Transverse colon (tissue), 4 donors: ENCODE measurements at regions of chr11 and their contacts with region 1.

Region 1: DNA sequence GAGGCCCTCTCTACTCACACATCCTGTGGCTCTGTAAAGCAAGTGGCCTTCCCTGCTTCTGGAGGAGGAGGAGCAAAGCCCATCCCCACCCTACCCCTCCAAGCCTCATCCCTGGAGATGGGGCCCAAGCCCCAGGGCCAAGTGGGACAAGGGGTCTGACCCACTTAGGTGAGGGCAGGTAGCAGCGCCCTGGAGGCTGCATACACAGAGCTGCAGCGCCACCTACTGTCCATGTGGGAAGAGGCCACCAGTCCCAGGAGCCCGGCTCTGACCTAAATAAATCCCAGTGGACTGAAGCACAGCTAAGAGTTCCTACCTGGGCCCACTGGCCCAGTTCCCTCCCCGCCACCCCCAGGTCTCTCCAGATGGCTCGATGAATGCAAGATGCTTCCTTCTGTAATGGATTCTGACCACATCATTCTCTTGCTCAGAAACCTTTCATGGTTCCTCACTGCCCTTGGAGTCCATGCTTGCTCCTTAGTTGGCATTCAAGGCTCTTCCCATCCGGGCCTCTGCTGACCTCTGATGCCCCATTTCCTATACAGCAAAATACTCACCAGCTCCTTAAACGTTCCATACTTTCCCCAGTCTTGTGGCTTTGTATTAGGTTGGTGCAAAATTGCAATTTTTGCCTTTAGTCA is 62.1 kb downstream of the THAP12 start:
- DNase-seq: peak; percentile 87
- H3K4me3 ChIP-seq: no peak overlapping the region
- H3K27ac ChIP-seq: no peak overlapping the region
- H3K4me1 ChIP-seq: peaks cover 0 to 9% (median 6%) of the 10 kb centered on the region in 4 donors
- H3K27me3 ChIP-seq: peaks cover 27% of the 10 kb centered on the region
- CTCF ChIP-seq: peak; percentile 87 to 97 (median 93)
- EP300 ChIP-seq: no peak
- POLR2A ChIP-seq: no peak

Region 2: DNA sequence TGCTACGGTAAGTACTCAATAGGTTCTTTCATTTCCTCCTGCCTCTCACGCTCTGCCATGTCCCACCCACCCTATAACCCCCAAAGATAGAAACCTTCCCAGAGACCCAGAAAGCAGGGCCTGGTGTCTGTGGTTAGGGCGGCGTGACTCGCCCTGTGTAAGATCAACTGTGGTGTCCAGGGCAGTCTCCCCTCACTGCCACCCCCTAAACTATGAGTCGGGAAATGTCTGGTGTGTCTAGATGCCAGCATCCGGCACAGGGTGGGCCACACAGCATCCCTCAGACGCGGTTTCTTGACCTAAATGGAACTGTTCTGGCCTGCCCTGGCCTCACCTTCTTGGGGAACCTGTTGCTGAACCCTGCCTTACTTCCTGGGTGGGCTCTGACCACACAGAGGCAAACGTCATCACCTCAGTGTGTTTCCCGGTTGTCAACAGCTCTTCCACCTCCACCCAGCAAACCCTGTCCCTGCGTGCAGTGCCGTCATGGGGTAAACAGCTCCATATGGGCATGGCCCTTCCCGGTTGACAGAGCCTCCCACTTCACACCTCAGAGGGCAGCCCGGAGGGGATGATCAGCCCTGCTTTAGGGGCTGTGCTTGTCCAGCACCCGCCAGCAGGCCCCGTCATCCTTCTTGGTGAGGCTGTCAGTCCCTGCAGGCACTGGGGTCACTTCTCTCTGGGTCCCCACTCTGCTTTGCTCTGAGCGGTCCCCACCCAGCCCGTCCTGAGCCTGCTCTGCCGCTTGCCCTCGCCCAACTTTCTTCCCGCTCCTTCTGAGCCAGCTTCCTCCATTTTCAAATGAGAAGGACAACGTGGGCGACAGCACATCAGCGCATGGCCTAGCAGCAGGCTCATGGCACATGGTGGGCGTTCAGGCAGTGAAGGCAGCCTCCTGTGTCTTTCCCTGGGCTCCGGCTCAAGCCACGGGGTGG is 118.6 kb before region 1 on chr11:
- in situ Hi-C with region 1: loop called in 2 of 4 experiments (anchors 5 to 25 kb)
- intact Hi-C with region 1: no loop called
- DNase-seq: no peak
- H3K4me3 ChIP-seq: no peak overlapping the region
- H3K27ac ChIP-seq: no peak overlapping the region
- H3K4me1 ChIP-seq: peaks cover 0 to under 1% (median 0%) of the 10 kb centered on the region in 4 donors
- H3K27me3 ChIP-seq: peaks cover 11% of the 10 kb centered on the region
- CTCF ChIP-seq: no peak
- EP300 ChIP-seq: no peak
- POLR2A ChIP-seq: no peak

Region 3: GRCh38 chr11:76207642-76208401 is 111.0 kb before region 1 on chr11:
- in situ Hi-C with region 1: loop called (anchors 5 to 25 kb)
- intact Hi-C with region 1: loop called (anchors 2 kb)
- DNase-seq: peak; percentile 89
- H3K4me3 ChIP-seq: peak overlapping the region; percentile 35 to 64 (median 46)
- H3K27ac ChIP-seq: peak overlapping the region in 3 of 4 donors; percentile 53 to 61 (median 58)
- H3K4me1 ChIP-seq: peaks cover 15 to 60% (median 55%) of the 10 kb centered on the region in 4 donors
- H3K27me3 ChIP-seq: peaks cover 75% of the 10 kb centered on the region
- CTCF ChIP-seq: peak; percentile 92 to 99 (median 97)
- EP300 ChIP-seq: no peak
- POLR2A ChIP-seq: no peak

Region 4: GRCh38 chr11:76419896-76420295 is 101.0 kb after region 1 on chr11:
- in situ Hi-C with region 1: no loop called
- intact Hi-C with region 1: no loop called
- DNase-seq: no peak
- H3K4me3 ChIP-seq: no peak overlapping the region
- H3K27ac ChIP-seq: no peak overlapping the region
- H3K4me1 ChIP-seq: no peaks in the 10 kb centered on the region
- H3K27me3 ChIP-seq: peaks cover 3% of the 10 kb centered on the region
- CTCF ChIP-seq: peak in 2 of 5 experiments; percentile 8 to 25
- EP300 ChIP-seq: no peak
- POLR2A ChIP-seq: no peak